ENCODE measurements at regions of chr11 and their contacts with region 1.

Region 1: GRCh38 chr11:124644426-124645280 is 22.0 kb downstream of the TBRG1 start:
- DNase-seq: peak; percentile 72
- H3K4me3 Mint-ChIP-seq: no peak overlapping the region
- H3K27ac Mint-ChIP-seq: no peak overlapping the region
- H3K4me1 Mint-ChIP-seq: peaks cover 15% of the 10 kb centered on the region
- H3K27me3 Mint-ChIP-seq: no peaks in the 10 kb centered on the region
- CTCF ChIP-seq: peak; percentile 79

Region 2: GRCh38 chr11:124622531-124623451 is 21.9 kb before region 1 on chr11 and contains the start of gene TBRG1:
- CTCF ChIA-PET with region 1: interaction called, 38 read pairs
- POLR2A ChIA-PET with region 1: interaction called, 6 read pairs
- intact Hi-C with region 1: no loop called
- DNase-seq: peak; percentile 87
- H3K4me3 Mint-ChIP-seq: peak within 1 kb of the TSS; percentile 95
- H3K27ac Mint-ChIP-seq: peak within 1 kb of the TSS; percentile 99
- H3K4me1 Mint-ChIP-seq: peaks cover 17% of the 10 kb centered on the region
- H3K27me3 Mint-ChIP-seq: peaks cover 16% of the 10 kb centered on the region
- CTCF ChIP-seq: no peak
- total RNA-seq, gene TBRG1: 46.9 and 54.0 TPM in 2 replicates

Region 3: DNA sequence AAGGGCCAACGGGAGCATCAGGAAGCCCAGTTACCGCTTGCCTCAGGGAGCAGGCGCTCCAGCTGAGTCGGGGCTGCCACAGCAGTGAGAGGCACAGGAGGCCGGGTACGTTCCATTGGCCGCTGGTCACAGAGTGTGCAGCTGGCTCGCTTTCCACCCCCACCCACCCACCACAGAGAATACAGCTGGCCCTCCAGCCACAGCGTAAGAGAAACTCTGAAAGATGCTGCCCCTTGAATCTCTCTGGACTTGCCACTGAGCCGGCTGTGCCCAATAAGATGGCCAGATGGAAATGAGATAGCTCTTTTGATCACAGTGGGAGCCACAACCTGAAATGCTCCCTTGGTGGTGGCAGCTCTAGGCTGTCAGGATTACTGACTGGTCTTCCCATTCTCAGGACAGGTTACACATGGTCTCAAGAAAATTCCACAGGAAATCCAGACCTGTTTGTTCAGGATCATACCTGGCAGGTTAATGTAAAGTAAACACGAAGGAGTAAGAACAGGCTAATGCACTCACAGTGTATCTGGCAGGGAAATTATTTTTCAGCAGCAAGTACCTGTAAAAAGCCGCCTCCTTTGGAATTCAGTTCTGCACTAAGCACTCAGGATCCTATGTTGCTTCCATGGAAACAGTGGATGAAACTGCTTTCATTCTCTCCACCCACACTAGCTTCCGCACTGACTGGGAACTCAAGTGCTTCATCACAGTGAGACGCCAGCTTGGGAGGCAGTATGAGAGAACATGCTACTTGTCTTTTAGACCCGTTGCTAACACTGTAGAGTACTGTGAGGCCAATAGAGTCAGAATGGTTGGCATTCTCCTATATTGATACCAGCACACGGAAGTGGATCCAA is 12.3 kb after region 1 on chr11:
- CTCF ChIA-PET with region 1: interaction called, 34 read pairs
- POLR2A ChIA-PET with region 1: interaction called, 3 read pairs
- intact Hi-C with region 1: no loop called
- DNase-seq: no peak
- H3K4me3 Mint-ChIP-seq: no peak overlapping the region
- H3K27ac Mint-ChIP-seq: no peak overlapping the region
- H3K4me1 Mint-ChIP-seq: no peaks in the 10 kb centered on the region
- H3K27me3 Mint-ChIP-seq: no peaks in the 10 kb centered on the region
- CTCF ChIP-seq: no peak

Region 4: DNA sequence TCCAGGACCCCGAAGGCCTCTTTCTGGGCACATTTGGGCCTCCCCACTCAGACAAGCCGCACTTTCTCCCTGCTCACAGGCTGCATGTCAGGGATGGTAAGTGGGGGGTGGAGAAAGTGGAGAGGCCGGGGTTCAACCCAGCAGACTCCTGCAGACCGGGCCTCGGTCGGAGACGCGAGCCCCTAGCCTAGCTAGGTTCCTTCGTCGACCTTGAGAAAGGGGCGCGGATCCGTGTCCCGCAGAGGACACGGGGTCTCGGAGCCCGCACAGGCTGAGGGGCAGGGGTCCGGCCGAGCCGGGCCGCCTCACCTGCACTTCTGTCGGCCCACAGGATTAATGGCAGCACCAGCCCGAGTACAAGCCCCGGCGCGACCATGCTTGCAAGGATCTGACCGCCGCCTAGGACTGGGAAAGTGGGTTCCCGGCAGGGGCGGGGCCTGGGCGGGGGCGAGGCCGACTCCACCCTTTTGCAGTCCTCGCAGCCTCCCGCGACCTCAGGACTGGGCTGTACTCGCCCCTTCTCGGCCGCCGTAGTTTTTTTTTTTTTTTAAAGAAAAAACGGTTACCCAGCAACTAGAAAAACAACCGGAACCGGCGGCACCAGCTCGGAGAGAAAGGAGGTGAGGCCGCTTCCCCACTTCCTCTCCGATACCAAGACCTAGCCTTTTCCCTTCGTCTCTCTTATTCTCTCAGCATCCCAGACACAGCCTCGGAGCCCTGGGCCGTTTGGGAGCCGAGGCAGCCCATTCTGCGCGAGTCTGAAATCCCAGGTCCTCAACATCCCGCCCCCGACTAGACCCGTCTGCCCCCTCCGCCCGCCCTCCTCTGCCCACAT is 28.9 kb after region 1 on chr11 and contains the starts of genes SIAE and SPA17:
- CTCF ChIA-PET with region 1: interaction called, 15 read pairs
- POLR2A ChIA-PET with region 1: interaction called, 3 read pairs
- intact Hi-C with region 1: no loop called
- DNase-seq: peak; percentile 95
- H3K4me3 Mint-ChIP-seq: peak within 1 kb of the TSS; percentile 88
- H3K27ac Mint-ChIP-seq: peak within 1 kb of the TSS; percentile 98
- H3K4me1 Mint-ChIP-seq: peaks cover 12% of the 10 kb centered on the region
- H3K27me3 Mint-ChIP-seq: no peaks in the 10 kb centered on the region
- CTCF ChIP-seq: no peak
- total RNA-seq, gene SIAE: 20.7 and 21.7 TPM in 2 replicates
- total RNA-seq, gene SPA17: 12.0 and 18.1 TPM in 2 replicates

Region 5: GRCh38 chr11:124769801-124770639 is 125.4 kb after region 1 on chr11:
- CTCF ChIA-PET with region 1: interaction called, 19 read pairs
- POLR2A ChIA-PET with region 1: no interaction called
- intact Hi-C with region 1: no loop called
- DNase-seq: peak; percentile 56
- H3K4me3 Mint-ChIP-seq: no peak overlapping the region
- H3K27ac Mint-ChIP-seq: peak overlapping the region; percentile 27
- H3K4me1 Mint-ChIP-seq: no peaks in the 10 kb centered on the region
- H3K27me3 Mint-ChIP-seq: no peaks in the 10 kb centered on the region
- CTCF ChIP-seq: no peak

Region 6: DNA sequence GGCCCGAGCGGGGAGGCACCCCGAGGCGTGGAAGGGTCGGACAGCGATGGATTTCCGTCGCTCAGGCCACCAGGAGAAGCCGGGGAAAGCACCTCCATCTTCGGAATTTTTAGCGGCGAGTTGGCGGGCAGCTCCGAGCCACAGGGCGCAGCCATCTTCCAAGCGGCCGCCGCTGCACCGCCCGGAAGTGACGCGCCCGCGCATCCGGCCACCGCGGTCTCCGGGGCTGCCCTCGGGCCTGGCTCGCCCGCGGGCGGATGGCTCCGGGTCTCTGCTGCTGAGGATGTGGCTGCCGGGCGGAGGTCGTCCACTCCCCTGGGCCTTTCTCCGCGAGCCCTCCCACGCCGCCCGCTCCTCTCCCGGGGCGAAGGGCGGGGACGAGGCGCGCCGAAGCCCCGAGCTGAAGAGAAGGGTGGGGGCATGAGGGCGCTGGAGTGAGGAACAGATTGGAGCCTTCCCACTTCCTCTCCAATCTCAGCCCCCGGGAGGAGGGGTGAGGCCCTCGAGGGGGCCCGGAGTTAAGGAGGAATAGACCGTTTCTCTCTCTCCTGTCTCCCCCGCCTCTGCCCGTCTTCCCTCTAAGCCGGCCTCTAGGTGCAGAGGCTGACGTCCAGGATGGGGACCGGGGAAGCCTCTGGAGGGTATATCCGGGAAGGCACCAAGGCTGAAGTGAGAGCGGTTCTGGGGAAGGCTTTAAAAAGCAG is 155.7 kb after region 1 on chr11 and contains the start of gene MSANTD2:
- CTCF ChIA-PET with region 1: interaction called, 22 read pairs
- POLR2A ChIA-PET with region 1: interaction called, 7 read pairs
- intact Hi-C with region 1: no loop called
- DNase-seq: peak; percentile 60
- H3K4me3 Mint-ChIP-seq: peak within 1 kb of the TSS; percentile 83
- H3K27ac Mint-ChIP-seq: peak within 1 kb of the TSS; percentile 84
- H3K4me1 Mint-ChIP-seq: peaks cover 11% of the 10 kb centered on the region
- H3K27me3 Mint-ChIP-seq: no peaks in the 10 kb centered on the region
- CTCF ChIP-seq: no peak
- total RNA-seq, gene MSANTD2: 14.2 and 15.3 TPM in 2 replicates

Region 7: DNA sequence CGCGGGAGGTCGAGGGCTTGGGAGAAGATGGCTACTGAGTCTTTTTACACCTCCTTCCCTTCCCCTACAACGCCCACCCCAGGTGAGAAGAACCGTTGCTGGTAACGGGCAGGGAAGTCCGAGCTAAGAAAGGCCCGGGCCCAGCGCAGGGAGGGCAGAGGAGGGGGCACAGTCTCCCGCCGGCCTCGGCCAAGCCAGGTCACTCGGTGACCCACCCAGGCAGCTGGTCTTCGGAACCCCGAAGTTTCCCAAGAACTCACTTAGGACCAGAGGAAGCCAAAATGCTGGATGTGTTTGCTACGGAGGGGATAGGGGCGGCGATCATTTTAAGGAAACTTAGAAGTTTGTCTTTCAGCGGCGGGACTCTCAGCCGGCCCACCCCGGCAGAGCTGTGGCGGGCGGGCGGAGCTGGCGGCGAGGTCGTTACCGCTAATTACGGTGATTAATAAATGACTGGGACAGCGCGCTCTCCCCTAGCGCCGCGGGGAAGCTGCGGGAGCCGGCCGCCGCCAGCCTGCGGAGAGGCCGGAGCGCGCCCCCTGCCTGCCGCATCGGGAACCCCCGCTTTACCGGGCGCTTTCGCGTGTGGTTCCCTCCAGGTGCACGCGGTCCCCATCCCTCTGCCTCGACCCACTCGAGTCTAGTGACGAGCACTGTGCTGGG is 221.4 kb after region 1 on chr11:
- CTCF ChIA-PET with region 1: interaction called, 6 read pairs
- POLR2A ChIA-PET with region 1: no interaction called
- intact Hi-C with region 1: loop called (anchors 1 kb)
- DNase-seq: peak; percentile 13
- H3K4me3 Mint-ChIP-seq: peak overlapping the region; percentile 47
- H3K27ac Mint-ChIP-seq: no peak overlapping the region
- H3K4me1 Mint-ChIP-seq: no peaks in the 10 kb centered on the region
- H3K27me3 Mint-ChIP-seq: peaks cover 88% of the 10 kb centered on the region
- CTCF ChIP-seq: peak; percentile 80

Region 8: DNA sequence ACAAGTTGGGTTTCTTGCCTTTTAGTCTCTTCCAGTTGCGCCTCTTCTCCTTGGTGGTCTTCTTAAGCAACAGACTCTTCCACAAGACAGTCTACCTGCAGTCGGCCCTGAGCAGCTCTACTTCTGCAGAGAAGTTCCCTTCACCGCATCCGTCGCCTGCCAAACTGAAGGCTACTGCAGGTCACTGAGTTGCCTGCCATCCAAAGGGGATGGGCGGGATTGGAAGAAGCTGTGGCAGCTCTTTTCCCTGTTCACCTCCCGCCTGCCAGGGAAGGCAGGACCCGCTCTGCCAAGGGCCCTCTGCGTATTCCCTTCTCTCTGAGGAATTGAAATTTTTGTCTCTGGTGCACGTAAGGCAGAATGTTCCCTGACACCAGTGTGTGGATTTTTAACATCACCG is 938.8 kb after region 1 on chr11:
- CTCF ChIA-PET with region 1: no interaction called
- POLR2A ChIA-PET with region 1: no interaction called
- intact Hi-C with region 1: no loop called
- DNase-seq: no peak
- H3K4me3 Mint-ChIP-seq: no peak overlapping the region
- H3K27ac Mint-ChIP-seq: peak overlapping the region; percentile 66
- H3K4me1 Mint-ChIP-seq: peaks cover 4% of the 10 kb centered on the region
- H3K27me3 Mint-ChIP-seq: no peaks in the 10 kb centered on the region
- CTCF ChIP-seq: no peak